ENCODE measurements at regions of chr11 and their contacts with region 1.

Region 1: GRCh38 chr11:69943066-69943465 is 123.8 kb upstream of the FGF3 start:
- DNase-seq: peak; percentile 60
- ATAC-seq: peak; percentile 68
- H3K4me3 ChIP-seq: no peak overlapping the region
- H3K27ac ChIP-seq: no peak overlapping the region
- H3K4me1 ChIP-seq: peaks cover 15% of the 10 kb centered on the region
- H3K27me3 ChIP-seq: no peaks in the 10 kb centered on the region
- CTCF ChIP-seq: peak; percentile 61

Region 2: DNA sequence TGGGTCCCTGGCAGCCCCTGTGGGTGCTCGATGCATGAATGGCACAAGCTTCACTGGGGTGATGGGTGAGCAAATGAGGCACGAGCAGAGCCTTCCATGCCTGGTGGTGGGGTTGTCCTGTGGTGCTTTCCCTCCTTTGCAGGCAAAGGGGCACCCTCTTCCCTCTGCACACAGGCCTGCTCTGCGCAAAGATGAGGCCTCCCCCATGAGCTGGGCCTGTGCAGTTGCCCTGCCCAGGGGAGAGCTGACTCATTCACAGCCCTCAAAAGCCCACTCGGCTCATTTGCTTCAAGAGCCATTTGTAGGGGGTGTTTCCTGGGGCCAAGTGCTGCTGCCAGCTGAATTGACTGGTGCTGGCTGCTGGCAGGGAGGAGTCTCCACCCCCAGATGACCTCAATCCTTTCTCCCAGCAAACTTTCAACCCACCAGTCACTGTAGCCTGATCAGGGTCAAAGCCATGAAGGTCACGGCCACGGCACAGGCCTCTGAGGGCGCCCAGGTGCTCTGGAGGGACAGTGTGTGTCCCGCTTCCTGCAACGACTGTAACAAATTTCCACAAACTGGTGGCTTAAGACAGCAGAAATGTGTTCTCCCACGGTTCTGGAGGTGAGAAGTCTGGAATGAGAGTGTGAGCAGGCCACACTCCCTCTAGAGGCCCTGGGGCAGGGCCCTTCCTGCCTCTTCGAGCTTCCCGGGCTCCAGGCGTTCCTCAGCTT is 86.2 kb after region 1 on chr11:
- CTCF ChIA-PET with region 1: no interaction called
- POLR2A ChIA-PET with region 1: no interaction called
- intact Hi-C with region 1: no loop called
- DNase-seq: no peak
- ATAC-seq: no peak
- H3K4me3 ChIP-seq: no peak overlapping the region
- H3K27ac ChIP-seq: no peak overlapping the region
- H3K4me1 ChIP-seq: no peaks in the 10 kb centered on the region
- H3K27me3 ChIP-seq: no peaks in the 10 kb centered on the region
- CTCF ChIP-seq: no peak

Region 3: DNA sequence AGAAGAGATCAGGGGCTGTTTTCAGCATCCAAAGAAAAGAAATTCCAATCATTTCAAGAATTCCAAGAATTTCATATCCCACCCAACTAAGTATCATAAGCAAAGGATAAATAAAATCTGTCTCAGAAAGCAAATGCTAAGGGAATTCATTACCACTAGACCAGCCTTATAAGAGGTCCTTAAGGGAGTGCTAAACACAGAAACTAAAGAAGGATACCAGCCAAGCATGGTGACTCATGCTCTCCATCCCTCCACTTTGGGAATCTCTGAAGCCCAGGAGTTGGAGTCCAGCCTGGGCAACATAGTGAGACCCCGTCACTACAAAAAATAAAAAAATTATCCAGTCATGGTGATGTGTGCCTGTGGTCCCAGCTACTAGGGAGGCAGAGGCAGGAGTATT is 277.9 kb after region 1 on chr11:
- CTCF ChIA-PET with region 1: interaction called, 11 read pairs
- POLR2A ChIA-PET with region 1: no interaction called
- intact Hi-C with region 1: no loop called
- DNase-seq: peak; percentile 31
- ATAC-seq: no peak
- H3K4me3 ChIP-seq: no peak overlapping the region
- H3K27ac ChIP-seq: no peak overlapping the region
- H3K4me1 ChIP-seq: no peaks in the 10 kb centered on the region
- H3K27me3 ChIP-seq: no peaks in the 10 kb centered on the region
- CTCF ChIP-seq: no peak